ENCODE measurements at regions of chr4 and their contacts with region 1.

Region 1: GRCh38 chr4:109702950-109703663 is at the start of gene CASP6:
- DNase-seq: peak; percentile 72 to 83 (median 77)
- H3K4me3 ChIP-seq: peak within 1 kb of the TSS; percentile 48 to 56
- H3K4me3 Mint-ChIP-seq: peak within 1 kb of the TSS; percentile 92 to 98 (median 95)
- H3K27ac ChIP-seq: peak within 1 kb of the TSS; percentile 71
- H3K27ac Mint-ChIP-seq: peak within 1 kb of the TSS; percentile 86 to 96 (median 93)
- H3K4me1 ChIP-seq: peaks cover 47% of the 10 kb centered on the region
- H3K4me1 Mint-ChIP-seq: peaks cover 31 to 60% (median 42%) of the 10 kb centered on the region in 4 donors
- H3K27me3 ChIP-seq: no peaks in the 10 kb centered on the region
- H3K27me3 Mint-ChIP-seq: no peaks in the 10 kb centered on the region
- total RNA-seq, gene CASP6: 16.5 to 24.7 TPM

Region 2: GRCh38 chr4:109315818-109316217 is 387.3 kb before region 1 on chr4:
- CTCF ChIA-PET with region 1: no interaction called
- POLR2A ChIA-PET with region 1: no interaction called
- intact Hi-C with region 1: no loop called
- DNase-seq: no peak
- H3K4me3 ChIP-seq: no peak overlapping the region
- H3K4me3 Mint-ChIP-seq: no peak overlapping the region
- H3K27ac ChIP-seq: no peak overlapping the region
- H3K27ac Mint-ChIP-seq: no peak overlapping the region
- H3K4me1 ChIP-seq: no peaks in the 10 kb centered on the region
- H3K4me1 Mint-ChIP-seq: no peaks in the 10 kb centered on the region
- H3K27me3 ChIP-seq: no peaks in the 10 kb centered on the region
- H3K27me3 Mint-ChIP-seq: peaks cover 8 to 13% of the 10 kb centered on the region in 2 donors

Region 3: DNA sequence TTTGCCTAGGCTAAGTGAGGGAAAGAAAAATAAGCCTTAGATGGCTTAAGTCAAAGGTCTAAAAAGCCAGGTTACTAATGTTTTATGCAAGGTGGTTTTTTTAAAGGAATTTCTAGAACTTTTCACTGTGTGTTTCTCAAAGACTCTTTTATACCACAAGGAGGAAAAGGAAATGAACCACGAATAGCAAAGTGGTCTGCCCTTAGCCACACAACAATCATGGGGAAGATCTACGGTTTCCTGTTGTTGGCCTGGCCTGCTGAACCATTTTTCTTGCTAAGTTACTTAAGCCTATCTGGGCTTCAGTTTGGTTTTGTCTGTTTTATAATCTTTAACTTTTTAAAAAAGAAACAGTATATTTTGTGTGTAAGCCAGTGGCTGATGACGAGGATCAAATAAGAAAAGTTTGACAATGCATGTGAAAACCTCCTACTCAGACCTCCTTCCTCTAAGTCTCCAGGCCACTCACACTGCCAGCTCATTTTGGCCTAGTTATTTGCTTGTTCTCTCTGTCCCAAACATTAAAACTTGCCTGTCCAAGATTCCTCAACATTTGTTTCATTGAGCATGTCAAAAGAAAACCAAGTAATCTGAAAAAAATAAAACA is 344.0 kb before region 1 on chr4:
- CTCF ChIA-PET with region 1: no interaction called
- POLR2A ChIA-PET with region 1: no interaction called
- intact Hi-C with region 1: no loop called
- DNase-seq: peak in 4 of 5 donors; percentile 41 to 57 (median 50)
- H3K4me3 ChIP-seq: no peak overlapping the region
- H3K4me3 Mint-ChIP-seq: peak overlapping the region in 6 of 8 donors; percentile 62 to 85 (median 69)
- H3K27ac ChIP-seq: no peak overlapping the region
- H3K27ac Mint-ChIP-seq: peak overlapping the region in 4 of 7 donors; percentile 8 to 32 (median 17)
- H3K4me1 ChIP-seq: peaks cover 24% of the 10 kb centered on the region
- H3K4me1 Mint-ChIP-seq: peaks cover 22 to 37% (median 25%) of the 10 kb centered on the region in 4 donors
- H3K27me3 ChIP-seq: no peaks in the 10 kb centered on the region
- H3K27me3 Mint-ChIP-seq: peaks cover 18 to 29% of the 10 kb centered on the region in 2 donors

Region 4: DNA sequence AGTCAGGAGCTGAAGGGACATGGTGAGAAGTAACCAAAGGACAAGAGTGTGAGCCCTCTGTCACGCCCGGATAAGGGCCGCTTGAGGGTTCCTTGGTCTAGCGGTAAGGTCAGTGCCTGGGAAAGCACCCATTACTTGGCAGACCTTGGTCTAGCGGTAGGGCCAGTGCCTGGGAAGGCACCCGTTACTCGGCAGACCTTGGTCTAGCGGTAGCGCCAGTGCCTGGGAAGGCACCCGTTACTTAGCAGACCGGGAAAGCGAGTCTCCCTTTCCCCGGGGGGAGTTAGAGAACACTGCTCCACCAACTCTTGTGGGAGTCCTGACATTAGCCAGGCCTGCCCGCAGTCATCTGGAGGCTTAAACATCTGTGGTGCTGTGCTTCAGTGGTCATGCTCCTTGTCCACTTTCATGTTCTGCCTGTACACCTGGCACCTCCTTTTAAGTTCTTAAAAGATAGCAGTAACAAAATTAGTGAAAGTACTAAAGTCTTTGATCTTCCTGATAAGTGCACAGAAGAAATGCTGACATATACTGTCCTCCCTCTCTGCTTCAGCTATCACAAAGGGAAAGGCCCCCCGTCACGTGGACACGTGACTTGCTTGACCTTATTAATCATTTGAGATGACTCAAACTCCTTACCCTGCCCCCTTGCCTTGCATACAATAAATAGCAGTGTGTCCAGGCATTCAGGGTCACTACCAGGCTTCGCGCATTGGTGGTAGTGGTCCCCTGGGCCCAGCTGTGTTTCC is 278.8 kb before region 1 on chr4:
- CTCF ChIA-PET with region 1: interaction called, 6 read pairs
- POLR2A ChIA-PET with region 1: no interaction called
- intact Hi-C with region 1: loop called (anchors 1 kb)
- DNase-seq: no peak
- H3K4me3 ChIP-seq: no peak overlapping the region
- H3K4me3 Mint-ChIP-seq: no peak overlapping the region
- H3K27ac ChIP-seq: no peak overlapping the region
- H3K27ac Mint-ChIP-seq: no peak overlapping the region
- H3K4me1 ChIP-seq: peaks cover 3% of the 10 kb centered on the region
- H3K4me1 Mint-ChIP-seq: peaks cover 0 to 4% (median 3%) of the 10 kb centered on the region in 4 donors
- H3K27me3 ChIP-seq: no peaks in the 10 kb centered on the region
- H3K27me3 Mint-ChIP-seq: peaks cover 0 to 3% of the 10 kb centered on the region in 2 donors

Region 5: DNA sequence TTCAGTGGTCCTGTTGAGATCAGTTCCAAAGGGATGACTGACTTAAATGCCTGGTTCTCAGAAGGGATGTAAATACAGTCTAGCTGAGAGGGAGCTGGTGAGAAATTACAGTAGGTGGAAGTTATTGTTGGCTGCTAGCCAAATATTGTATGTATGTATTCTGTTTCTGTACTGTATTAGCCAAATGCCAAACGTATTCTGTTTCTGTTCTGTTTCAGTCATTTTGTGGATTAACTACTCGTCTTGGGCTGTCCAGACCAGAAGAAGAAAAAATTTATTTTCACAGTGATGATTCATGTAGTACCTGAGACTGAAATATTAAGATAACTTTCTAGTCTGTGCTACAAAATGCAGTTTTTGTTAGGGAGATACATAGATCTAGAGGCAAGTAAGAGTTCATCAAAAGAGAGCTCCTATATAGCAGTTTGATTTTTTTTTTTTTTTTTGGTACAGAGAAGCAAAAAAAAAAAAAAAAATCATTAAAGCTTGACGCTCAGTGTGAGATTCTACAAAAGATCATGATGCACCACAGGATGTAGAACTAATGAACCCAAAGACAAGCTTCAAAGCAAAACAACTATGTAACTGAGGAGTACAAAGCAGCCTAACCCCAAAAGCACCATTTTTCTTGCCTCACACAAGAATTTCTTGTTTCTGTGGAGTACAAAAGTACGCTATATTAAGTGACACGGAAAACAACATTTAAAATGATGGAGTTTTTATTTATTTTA is 54.7 kb before region 1 on chr4:
- CTCF ChIA-PET with region 1: interaction called, 10 read pairs
- POLR2A ChIA-PET with region 1: interaction called, 11 read pairs
- intact Hi-C with region 1: loop called (anchors 1 kb)
- DNase-seq: peak; percentile 70 to 84 (median 81)
- H3K4me3 ChIP-seq: peak overlapping the region; percentile 12 to 25
- H3K4me3 Mint-ChIP-seq: peak overlapping the region; percentile 59 to 86 (median 77)
- H3K27ac ChIP-seq: peak overlapping the region; percentile 61
- H3K27ac Mint-ChIP-seq: peak overlapping the region in 6 of 7 donors; percentile 90 to 98 (median 94)
- H3K4me1 ChIP-seq: peaks cover 82% of the 10 kb centered on the region
- H3K4me1 Mint-ChIP-seq: peaks cover 12 to 48% (median 41%) of the 10 kb centered on the region in 4 donors
- H3K27me3 ChIP-seq: no peaks in the 10 kb centered on the region
- H3K27me3 Mint-ChIP-seq: no peaks in the 10 kb centered on the region

Region 6: GRCh38 chr4:109729718-109730618 is 26.9 kb after region 1 on chr4 and contains the start of gene PLA2G12A:
- CTCF ChIA-PET with region 1: interaction called, 6 read pairs
- POLR2A ChIA-PET with region 1: interaction called, 23 read pairs
- intact Hi-C with region 1: loop called (anchors 1 kb)
- DNase-seq: peak; percentile 78 to 90 (median 87)
- H3K4me3 ChIP-seq: peak within 1 kb of the TSS; percentile 58 to 94
- H3K4me3 Mint-ChIP-seq: peak within 1 kb of the TSS; percentile 89 to 93 (median 91)
- H3K27ac ChIP-seq: peak within 1 kb of the TSS; percentile 72
- H3K27ac Mint-ChIP-seq: peak within 1 kb of the TSS; percentile 73 to 94 (median 90)
- H3K4me1 ChIP-seq: peaks cover 18% of the 10 kb centered on the region
- H3K4me1 Mint-ChIP-seq: peaks cover 18 to 32% (median 21%) of the 10 kb centered on the region in 4 donors
- H3K27me3 ChIP-seq: no peaks in the 10 kb centered on the region
- H3K27me3 Mint-ChIP-seq: peaks cover 0 to 1% of the 10 kb centered on the region in 2 donors
- total RNA-seq, gene PLA2G12A: 15.7 to 18.1 TPM

Region 7: GRCh38 chr4:109826719-109827118 is 123.6 kb after region 1 on chr4:
- CTCF ChIA-PET with region 1: interaction called, 9 read pairs
- POLR2A ChIA-PET with region 1: no interaction called
- intact Hi-C with region 1: loop called (anchors 1 kb)
- DNase-seq: peak in 3 of 5 donors; percentile 23 to 37 (median 27)
- H3K4me3 ChIP-seq: no peak overlapping the region
- H3K4me3 Mint-ChIP-seq: no peak overlapping the region
- H3K27ac ChIP-seq: no peak overlapping the region
- H3K27ac Mint-ChIP-seq: no peak overlapping the region
- H3K4me1 ChIP-seq: no peaks in the 10 kb centered on the region
- H3K4me1 Mint-ChIP-seq: peaks cover 0 to 4% (median under 1%) of the 10 kb centered on the region in 4 donors
- H3K27me3 ChIP-seq: no peaks in the 10 kb centered on the region
- H3K27me3 Mint-ChIP-seq: no peaks in the 10 kb centered on the region

Measured in CD4-positive, alpha-beta memory T cell (primary cell).